Thyroid gland (tissue), 4 donors: ENCODE measurements at regions of chr4 and their contacts with region 1.

Region 1: DNA sequence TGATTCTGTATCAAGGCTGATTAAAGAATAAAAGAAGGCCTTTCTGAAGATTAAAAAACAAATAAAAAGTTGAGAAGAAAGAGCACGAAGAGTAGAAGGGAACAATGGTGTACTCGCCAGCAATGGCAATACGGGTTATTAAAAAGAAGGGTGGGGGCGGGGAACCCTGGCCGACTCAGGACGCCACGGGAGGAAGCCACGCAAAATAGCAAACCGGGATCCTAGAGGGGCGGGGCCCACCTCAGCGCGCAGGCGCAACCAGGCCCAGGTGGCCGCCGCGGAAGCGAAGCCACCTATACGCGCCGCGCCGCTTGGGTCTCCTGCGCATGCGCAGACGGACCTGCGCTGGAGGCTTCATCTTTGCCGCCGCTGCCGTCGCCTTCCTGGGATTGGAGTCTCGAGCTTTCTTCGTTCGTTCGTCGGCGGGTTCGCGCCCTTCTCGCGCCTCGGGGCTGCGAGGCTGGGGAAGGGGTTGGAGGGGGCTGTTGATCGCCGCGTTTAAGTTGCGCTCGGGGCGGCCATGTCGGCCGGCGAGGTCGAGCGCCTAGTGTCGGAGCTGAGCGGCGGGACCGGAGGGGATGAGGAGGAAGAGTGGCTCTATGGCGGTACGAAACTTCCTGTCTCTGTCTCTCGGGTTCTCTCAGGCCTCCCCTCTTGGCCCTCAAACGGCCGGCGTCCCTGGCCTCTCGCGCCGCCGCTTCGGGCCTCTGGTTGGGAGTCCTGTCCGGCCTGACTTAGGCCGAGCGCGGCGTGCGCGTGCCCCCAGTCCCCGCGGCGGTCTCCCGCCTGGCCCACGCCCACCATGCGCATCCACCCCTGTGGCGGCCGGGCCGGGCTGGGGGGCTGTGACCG is at the start of gene FIP1L1:
- DNase-seq: peak; percentile 96 to 97
- H3K4me3 ChIP-seq: peak within 1 kb of the TSS; percentile 67 to 84 (median 82)
- H3K27ac ChIP-seq: peak within 1 kb of the TSS; percentile 67 to 85 (median 75)
- H3K4me1 ChIP-seq: peaks cover 10 to 13% of the 10 kb centered on the region in 2 donors
- H3K27me3 ChIP-seq: no peaks in the 10 kb centered on the region
- CTCF ChIP-seq: no peak
- POLR2A ChIP-seq: peak in 1 of 2 donors; percentile 87
- total RNA-seq, gene FIP1L1: 55.4 to 66.1 (median 59.1) TPM

Region 2: GRCh38 chr4:51842554-51843308 is 1534.8 kb before region 1 on chr4 and contains the start of gene DCUN1D4:
- intact Hi-C with region 1: loop called (anchors 10 kb)
- DNase-seq: peak; percentile 100
- H3K4me3 ChIP-seq: peak within 1 kb of the TSS; percentile 78 to 85 (median 82)
- H3K27ac ChIP-seq: peak within 1 kb of the TSS; percentile 79 to 95 (median 86)
- H3K4me1 ChIP-seq: peaks cover 13% of the 10 kb centered on the region in 2 donors
- H3K27me3 ChIP-seq: no peaks in the 10 kb centered on the region
- CTCF ChIP-seq: peak in 3 of 6 experiments; percentile 26 to 45 (median 40)
- POLR2A ChIP-seq: peak; percentile 67 to 83
- total RNA-seq, gene DCUN1D4: 44.6 to 81.4 (median 51.7) TPM

Region 3: DNA sequence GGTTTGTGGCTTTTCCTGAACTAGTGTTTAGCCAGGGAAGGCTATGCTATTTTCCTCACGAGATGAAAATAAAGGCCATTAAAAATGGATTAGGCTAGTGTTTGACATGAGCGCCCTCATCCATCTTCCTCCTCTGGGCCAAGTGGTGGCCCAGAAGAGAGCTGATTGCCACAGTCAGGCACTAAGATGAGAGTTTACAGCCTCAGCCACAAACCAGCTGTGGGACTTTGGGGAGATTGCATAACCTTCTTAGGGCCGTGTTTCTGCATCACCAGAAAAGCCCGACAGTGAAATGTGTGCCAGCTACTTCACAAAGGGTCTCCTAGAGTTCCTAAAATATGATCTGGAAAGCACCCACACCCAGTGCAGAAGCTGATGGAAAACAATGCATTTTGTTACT is 256.1 kb after region 1 on chr4:
- intact Hi-C with region 1: no loop called
- DNase-seq: no peak
- H3K4me3 ChIP-seq: no peak overlapping the region
- H3K27ac ChIP-seq: no peak overlapping the region
- H3K4me1 ChIP-seq: peaks cover 3 to 4% of the 10 kb centered on the region in 2 donors
- H3K27me3 ChIP-seq: no peaks in the 10 kb centered on the region
- CTCF ChIP-seq: no peak
- POLR2A ChIP-seq: no peak

Region 4: DNA sequence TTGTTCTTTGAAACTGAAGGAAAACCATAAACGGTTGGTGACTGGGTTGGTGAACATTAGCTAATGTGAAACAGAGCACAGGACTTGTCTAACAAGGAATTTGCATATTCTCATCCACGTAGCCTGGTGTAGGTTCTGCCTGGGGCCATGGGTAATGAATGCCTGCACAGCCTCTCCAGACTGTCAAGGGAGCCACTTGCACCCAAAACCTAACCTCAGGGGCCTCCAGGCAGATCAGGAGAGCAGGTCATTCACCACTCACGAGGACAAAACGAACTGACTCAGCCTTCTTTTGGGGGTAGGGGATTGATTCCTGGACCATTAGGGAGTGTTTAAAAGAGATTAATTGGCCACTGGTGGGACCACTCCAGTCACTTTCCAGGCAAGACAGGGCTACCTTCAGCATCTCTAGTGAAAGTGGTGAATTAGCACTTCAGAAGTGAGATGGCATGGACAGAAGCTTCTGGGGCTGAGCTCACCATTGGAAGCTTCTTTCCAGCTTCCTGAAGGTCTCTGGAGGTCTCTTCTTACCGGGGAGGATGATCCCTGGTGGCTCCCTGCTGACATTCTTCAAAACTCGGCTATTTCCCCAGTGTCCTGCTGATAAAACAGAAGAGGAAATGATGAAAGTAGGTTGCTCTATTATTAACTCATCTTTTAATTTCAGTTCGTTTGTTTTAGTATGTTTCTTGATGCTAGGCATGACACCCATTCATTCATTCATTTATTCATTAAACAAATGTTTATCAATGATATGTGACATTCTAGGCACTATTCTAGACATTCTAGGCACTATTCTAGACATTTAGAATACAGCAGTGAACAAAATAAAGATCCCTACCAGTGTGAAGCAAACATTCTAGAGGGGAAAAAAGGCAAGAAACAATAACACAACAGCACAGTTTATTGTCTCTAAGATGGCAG is 318.3 kb after region 1 on chr4:
- intact Hi-C with region 1: no loop called
- DNase-seq: no peak
- H3K4me3 ChIP-seq: no peak overlapping the region
- H3K27ac ChIP-seq: no peak overlapping the region
- H3K4me1 ChIP-seq: peaks cover 6% of the 10 kb centered on the region in 2 donors
- H3K27me3 ChIP-seq: no peaks in the 10 kb centered on the region
- CTCF ChIP-seq: no peak
- POLR2A ChIP-seq: no peak